ENCODE measurements at regions of chr3 and their contacts with region 1.

Region 1: DNA sequence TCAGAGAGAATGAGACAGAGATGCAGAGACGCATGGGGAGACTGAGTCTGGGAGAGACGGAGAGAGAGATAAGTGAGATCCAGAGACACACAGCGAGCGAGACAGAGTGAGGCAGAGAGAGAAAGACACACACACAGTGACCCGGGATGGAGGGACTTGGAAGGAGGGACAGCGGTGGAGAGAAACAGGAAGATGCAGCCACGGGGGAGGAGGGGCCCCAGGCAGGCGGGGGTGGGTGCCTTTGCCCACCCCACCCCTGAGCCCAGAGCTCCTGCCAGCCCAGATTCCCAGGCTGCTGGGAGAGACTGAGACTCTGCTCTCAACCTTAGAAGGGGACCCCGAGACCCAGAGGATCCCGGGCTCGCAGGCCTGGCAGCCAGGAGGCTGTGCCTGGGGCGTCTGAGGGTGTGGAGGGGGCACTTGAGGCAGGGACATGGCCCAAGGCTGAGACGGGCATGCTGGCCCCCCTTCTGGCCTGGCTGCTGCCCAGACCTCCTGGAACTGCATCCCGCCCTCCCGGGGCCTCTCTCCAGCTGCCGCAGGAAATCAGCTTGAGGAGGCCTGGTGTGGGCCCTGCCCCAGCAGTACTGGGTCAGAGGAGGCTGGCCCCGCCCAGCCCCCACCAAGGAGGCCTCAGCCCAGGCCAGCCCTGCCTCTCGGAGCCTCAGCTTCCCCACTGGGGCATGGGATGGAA is 18.1 kb downstream of the H1-8 start:
- DNase-seq: peak; percentile 86 to 90
- ATAC-seq: peak; percentile 73 to 90 (median 86)
- H3K4me3 ChIP-seq: no peak overlapping the region
- H3K27ac ChIP-seq: peak overlapping the region; percentile 50 to 94 (median 85)
- H3K4me1 ChIP-seq: peaks cover 45 to 100% (median 91%) of the 10 kb centered on the region in 9 donors
- H3K27me3 ChIP-seq: no peaks in the 10 kb centered on the region
- CTCF ChIP-seq: no peak

Region 2: DNA sequence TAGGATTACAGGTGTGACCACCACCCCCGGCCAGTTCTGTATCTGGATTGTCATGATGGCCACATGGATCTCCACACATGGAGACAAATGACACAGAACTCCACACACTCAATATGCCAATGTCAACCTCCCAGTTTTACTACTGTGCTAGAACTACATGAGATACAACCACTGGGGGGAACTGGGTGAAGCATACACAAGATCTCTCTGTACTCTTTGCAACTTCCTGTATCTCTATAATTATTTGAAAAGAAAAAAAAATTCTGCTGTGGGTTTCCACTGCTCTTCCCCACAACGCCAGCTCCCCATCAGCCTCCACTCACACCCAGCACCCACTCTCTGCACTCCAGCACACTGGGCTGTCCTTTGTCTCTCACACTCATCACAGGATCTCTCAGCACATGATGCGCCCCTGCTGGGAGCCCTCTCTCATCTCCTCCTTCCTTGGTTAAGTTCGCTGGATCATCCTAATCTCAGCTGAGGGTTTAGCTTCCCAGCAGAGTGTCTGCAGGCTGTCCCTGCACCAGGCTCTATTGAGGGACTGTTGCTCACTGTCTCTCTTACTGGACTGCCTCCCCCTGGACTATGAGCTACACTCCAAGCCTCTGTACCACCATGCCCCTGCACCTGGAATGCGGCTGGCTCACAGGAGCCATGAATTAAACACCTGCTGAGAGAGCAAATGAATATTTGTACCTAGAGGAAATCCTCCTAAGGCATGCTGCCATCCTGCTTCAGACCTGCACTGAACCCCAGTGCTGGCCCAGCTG is 428.8 kb before region 1 on chr3:
- intact Hi-C with region 1: no loop called
- DNase-seq: no peak
- ATAC-seq: peak in 4 of 8 donors; percentile 23 to 68 (median 47)
- H3K4me3 ChIP-seq: no peak overlapping the region
- H3K27ac ChIP-seq: no peak overlapping the region
- H3K4me1 ChIP-seq: no peaks in the 10 kb centered on the region
- H3K27me3 ChIP-seq: no peaks in the 10 kb centered on the region
- CTCF ChIP-seq: no peak

Region 3: DNA sequence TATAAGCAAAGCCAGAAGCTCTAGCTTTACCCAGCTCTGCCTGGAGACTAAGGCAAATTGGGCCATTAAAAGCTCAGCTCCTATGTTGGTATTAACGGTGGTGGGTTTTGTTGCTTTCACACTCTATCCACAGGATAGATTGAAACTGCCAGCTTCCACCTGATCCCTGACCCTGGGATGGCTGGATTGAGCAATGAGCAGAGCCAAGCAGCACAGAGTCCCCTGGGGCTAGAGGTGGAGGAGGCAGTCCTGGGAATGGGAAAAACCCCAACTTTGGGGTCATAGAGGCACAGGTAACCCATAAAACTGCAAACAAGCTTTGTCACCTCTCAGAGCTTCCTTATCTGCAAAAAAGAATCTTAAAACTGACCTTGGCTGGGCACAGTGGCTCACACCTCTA is 26.0 kb before region 1 on chr3:
- intact Hi-C with region 1: no loop called
- DNase-seq: no peak
- ATAC-seq: no peak
- H3K4me3 ChIP-seq: no peak overlapping the region
- H3K27ac ChIP-seq: no peak overlapping the region
- H3K4me1 ChIP-seq: peaks cover 0 to 7% (median under 1%) of the 10 kb centered on the region in 9 donors
- H3K27me3 ChIP-seq: no peaks in the 10 kb centered on the region
- CTCF ChIP-seq: no peak

Region 4: DNA sequence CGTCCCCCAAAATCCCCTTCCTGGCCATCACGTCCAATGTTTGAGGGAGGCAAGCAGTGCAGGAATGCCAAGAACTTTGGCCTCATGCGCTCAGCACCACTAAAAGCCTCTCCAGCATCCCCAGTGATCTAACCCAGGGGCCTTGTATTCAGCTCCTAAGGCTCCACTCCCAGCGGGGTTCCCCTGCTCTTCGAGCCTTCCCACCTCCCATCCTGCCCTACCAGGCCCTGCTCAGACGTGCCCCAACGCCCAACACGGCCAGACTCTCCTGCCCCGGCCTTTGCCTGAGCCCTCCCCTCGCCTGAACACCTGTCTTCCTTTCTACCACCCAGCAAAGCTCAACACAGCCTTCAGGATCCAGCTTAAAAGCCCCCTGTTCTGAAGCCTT is 14.9 kb after region 1 on chr3:
- intact Hi-C with region 1: no loop called
- DNase-seq: no peak
- ATAC-seq: no peak
- H3K4me3 ChIP-seq: no peak overlapping the region
- H3K27ac ChIP-seq: peak overlapping the region in 5 of 10 donors; percentile 4 to 92 (median 74)
- H3K4me1 ChIP-seq: peaks cover 0 to 49% (median 37%) of the 10 kb centered on the region in 9 donors
- H3K27me3 ChIP-seq: no peaks in the 10 kb centered on the region
- CTCF ChIP-seq: no peak

Region 5: GRCh38 chr3:129596194-129597086 is 35.4 kb after region 1 on chr3:
- intact Hi-C with region 1: loop called in 5 of 10 experiments (anchors 5 kb)
- DNase-seq: peak; percentile 93 to 96
- ATAC-seq: peak; percentile 74 to 89 (median 83)
- H3K4me3 ChIP-seq: peak overlapping the region in 9 of 10 donors; percentile 9 to 66 (median 37)
- H3K27ac ChIP-seq: peak overlapping the region; percentile 55 to 99 (median 92)
- H3K4me1 ChIP-seq: peaks cover 53 to 100% (median 98%) of the 10 kb centered on the region in 9 donors
- H3K27me3 ChIP-seq: no peaks in the 10 kb centered on the region
- CTCF ChIP-seq: peak in 2 of 9 donors; percentile 6 to 14

Region 6: DNA sequence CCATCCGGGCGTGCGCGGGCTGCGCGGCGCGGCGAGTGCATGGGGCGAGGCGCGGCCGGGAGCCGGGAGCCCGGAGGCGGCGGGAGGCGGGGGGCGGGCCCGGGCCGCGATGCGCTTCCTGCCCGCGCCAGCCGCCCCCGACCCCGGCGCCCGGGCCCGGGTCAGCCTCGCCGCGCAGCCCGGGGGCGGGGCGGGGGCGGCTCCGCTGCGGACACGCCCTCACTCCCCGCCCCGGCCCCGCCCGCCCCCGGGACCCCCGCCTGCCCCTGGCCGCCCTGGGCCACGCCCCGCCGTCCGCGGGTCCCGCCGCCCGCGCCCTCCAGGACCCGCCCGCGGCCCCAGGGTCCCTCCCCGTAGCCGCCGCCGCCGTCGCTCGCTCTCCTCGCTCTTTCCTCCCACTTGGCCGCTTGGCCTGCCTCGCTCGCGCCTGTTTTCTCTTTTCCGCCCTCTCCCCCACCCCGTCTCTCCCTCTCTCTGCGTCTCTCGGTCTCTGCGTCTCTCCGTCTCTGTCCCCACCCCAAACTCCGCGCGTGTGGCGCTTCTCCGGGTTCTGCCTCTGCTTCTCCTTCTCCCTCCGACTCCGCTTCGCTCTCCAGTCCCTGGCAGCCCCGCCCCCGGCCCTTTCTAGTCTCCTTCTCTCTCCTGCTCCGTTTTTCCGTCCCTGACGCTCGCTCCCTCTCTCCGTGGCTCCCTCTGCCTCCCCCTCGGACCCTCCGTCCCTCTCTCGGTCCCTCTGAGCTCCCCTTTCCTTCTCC is 45.8 kb after region 1 on chr3 and contains the start of gene PLXND1:
- intact Hi-C with region 1: loop called in 3 of 10 experiments (anchors 2 to 5 kb)
- DNase-seq: peak; percentile 83 to 87
- ATAC-seq: peak; percentile 63 to 78 (median 68)
- H3K4me3 ChIP-seq: peak within 1 kb of the TSS; percentile 62 to 91 (median 74)
- H3K27ac ChIP-seq: peak within 1 kb of the TSS; percentile 89 to 99 (median 94)
- H3K4me1 ChIP-seq: peaks cover 16 to 78% (median 72%) of the 10 kb centered on the region in 9 donors
- H3K27me3 ChIP-seq: peaks cover 0 to 18% (median 4%) of the 10 kb centered on the region in 7 donors
- CTCF ChIP-seq: no peak
- total RNA-seq, gene PLXND1: 40.9 to 106 (median 62.8) TPM